ENCODE measurements at regions of chr17 and their contacts with region 1.

Region 1: GRCh38 chr17:32927724-32928585 is at the start of gene TMEM98:
- DNase-seq: peak in 1 of 2 experiments; percentile 82
- H3K4me3 ChIP-seq: peak within 1 kb of the TSS; percentile 77
- H3K4me3 Mint-ChIP-seq: no peak within 1 kb of the TSS
- H3K27ac Mint-ChIP-seq: peak within 1 kb of the TSS; percentile 65
- H3K4me1 ChIP-seq: peaks cover 23% of the 10 kb centered on the region
- H3K4me1 Mint-ChIP-seq: no peaks in the 10 kb centered on the region
- H3K27me3 ChIP-seq: no peaks in the 10 kb centered on the region
- H3K27me3 Mint-ChIP-seq: no peaks in the 10 kb centered on the region
- CTCF ChIP-seq: no peak
- total RNA-seq, gene TMEM98: 189 and 229 TPM in 2 replicates

Region 2: DNA sequence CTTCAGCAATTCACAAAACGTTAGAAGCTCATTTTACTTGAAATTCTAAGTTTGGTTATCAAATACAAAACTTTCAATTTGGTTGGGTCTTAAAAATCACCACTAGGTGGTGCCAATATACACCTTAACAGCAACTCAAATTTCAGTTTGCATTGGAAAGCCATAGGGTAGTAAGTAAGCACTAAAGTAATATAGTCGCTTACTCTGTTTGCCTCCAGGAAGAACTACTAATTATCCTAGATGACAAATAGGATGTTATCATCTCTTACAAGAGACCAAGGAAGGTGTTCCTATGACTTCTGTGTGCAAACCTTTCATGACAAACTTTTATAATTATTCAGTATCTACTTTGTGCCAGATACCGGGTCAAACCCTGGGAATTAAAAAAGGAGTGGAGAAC is 144.4 kb before region 1 on chr17:
- CTCF ChIA-PET with region 1: no interaction called
- POLR2A ChIA-PET with region 1: no interaction called
- intact Hi-C with region 1: loop called (anchors 5 kb)
- DNase-seq: peak in 1 of 2 experiments; percentile 53
- H3K4me3 ChIP-seq: no peak overlapping the region
- H3K4me3 Mint-ChIP-seq: no peak overlapping the region
- H3K27ac Mint-ChIP-seq: peak overlapping the region; percentile 68
- H3K4me1 ChIP-seq: peaks cover 13% of the 10 kb centered on the region
- H3K4me1 Mint-ChIP-seq: peaks cover 21% of the 10 kb centered on the region
- H3K27me3 ChIP-seq: no peaks in the 10 kb centered on the region
- H3K27me3 Mint-ChIP-seq: no peaks in the 10 kb centered on the region
- CTCF ChIP-seq: peak; percentile 64 to 82

Region 3: GRCh38 chr17:32903774-32904673 is 23.9 kb before region 1 on chr17:
- CTCF ChIA-PET with region 1: no interaction called
- POLR2A ChIA-PET with region 1: no interaction called
- intact Hi-C with region 1: no loop called
- DNase-seq: no peak
- H3K4me3 ChIP-seq: no peak overlapping the region
- H3K4me3 Mint-ChIP-seq: no peak overlapping the region
- H3K27ac Mint-ChIP-seq: no peak overlapping the region
- H3K4me1 ChIP-seq: peaks cover 27% of the 10 kb centered on the region
- H3K4me1 Mint-ChIP-seq: peaks cover 11% of the 10 kb centered on the region
- H3K27me3 ChIP-seq: no peaks in the 10 kb centered on the region
- H3K27me3 Mint-ChIP-seq: no peaks in the 10 kb centered on the region
- CTCF ChIP-seq: no peak

Region 4: DNA sequence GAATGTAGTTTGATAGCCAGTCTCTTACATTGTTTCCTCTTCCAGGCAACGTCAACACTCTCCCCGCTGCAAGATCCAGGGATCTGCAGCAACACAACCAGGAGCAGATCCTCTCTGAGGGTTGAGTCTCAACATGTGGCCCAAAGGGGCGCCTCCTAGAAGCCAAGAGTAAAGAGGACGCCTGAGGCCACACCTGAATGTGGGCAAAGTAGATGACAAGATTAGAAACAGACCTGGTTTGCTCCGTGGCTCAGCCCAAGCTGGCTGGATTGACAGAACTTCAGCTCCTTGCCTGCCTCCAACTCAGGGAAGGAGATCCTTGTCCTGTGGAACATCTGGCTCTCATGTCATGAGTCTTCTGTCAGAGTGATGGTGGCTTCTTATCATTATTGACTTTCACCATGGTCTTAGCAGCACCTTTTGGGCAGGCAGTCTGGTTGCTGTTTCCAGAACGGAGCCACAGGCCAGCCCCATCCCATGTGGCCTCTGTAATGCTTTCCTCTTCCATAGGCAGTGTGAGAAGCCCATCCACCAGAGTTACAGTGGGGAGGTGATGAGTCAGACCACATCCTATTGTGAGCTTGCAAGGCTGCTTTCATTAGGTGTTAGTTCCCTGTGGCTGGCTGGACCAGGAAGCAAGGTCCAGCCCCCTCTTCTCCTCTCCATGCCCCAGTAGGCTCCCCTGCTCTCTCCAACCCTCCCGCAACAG is 32.7 kb after region 1 on chr17:
- CTCF ChIA-PET with region 1: no interaction called
- POLR2A ChIA-PET with region 1: no interaction called
- intact Hi-C with region 1: no loop called
- DNase-seq: no peak
- H3K4me3 ChIP-seq: no peak overlapping the region
- H3K4me3 Mint-ChIP-seq: no peak overlapping the region
- H3K27ac Mint-ChIP-seq: peak overlapping the region; percentile 61
- H3K4me1 ChIP-seq: peaks cover 57% of the 10 kb centered on the region
- H3K4me1 Mint-ChIP-seq: peaks cover 56% of the 10 kb centered on the region
- H3K27me3 ChIP-seq: no peaks in the 10 kb centered on the region
- H3K27me3 Mint-ChIP-seq: no peaks in the 10 kb centered on the region
- CTCF ChIP-seq: no peak

Region 5: GRCh38 chr17:33127706-33128105 is 199.8 kb after region 1 on chr17:
- CTCF ChIA-PET with region 1: no interaction called
- POLR2A ChIA-PET with region 1: no interaction called
- intact Hi-C with region 1: no loop called
- DNase-seq: no peak
- H3K4me3 ChIP-seq: no peak overlapping the region
- H3K4me3 Mint-ChIP-seq: no peak overlapping the region
- H3K27ac Mint-ChIP-seq: no peak overlapping the region
- H3K4me1 ChIP-seq: no peaks in the 10 kb centered on the region
- H3K4me1 Mint-ChIP-seq: no peaks in the 10 kb centered on the region
- H3K27me3 ChIP-seq: no peaks in the 10 kb centered on the region; the same call in 1 of the 2 replicates
- H3K27me3 Mint-ChIP-seq: peaks cover 37% of the 10 kb centered on the region
- CTCF ChIP-seq: no peak

Measured in Caco-2 (cell line).